ENCODE measurements at regions of chr12 and their contacts with region 1.

Region 1: DNA sequence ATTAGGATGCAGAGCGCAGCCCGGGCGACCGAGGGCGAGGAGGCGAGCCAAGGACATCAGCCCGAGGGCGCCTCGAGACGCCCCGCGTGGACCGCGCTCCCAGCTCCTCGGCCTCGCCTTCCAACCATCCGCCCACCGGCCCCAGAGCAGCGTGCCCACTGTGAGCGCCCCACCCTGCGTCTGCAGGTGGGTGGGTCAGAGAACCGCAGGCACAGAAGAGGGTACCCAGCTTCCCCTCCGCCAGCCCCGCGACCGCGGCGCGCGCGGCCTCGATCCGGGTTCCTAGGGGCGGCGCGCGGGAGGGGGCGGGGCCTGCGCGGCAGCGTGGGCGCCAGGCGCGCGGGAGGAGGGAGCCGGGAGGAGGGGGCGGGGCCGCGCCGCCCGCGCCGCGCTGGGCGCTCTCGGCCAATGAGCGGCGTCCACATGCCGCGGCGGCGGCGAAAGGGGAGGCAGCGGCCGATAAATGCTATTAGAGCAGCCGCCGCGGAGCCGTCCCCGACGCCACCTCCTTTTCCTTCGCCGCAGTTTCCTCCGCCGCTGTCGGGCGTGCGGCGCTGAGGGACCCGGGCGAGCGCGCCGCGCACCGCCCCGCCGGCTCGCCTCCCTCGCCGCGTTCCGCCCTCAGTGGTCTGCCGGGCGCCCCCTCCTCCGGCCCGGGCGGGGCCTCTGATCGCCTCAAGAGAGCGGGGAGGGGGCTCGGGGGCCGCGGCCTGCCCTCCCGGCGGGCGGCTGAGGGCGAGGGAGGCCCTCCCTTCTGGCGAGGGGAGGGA is at the start of gene ATP2A2:
- DNase-seq: peak; percentile 91
- ATAC-seq: peak; percentile 84
- H3K4me3 Mint-ChIP-seq: peak within 1 kb of the TSS; percentile 96
- H3K27ac Mint-ChIP-seq: peak within 1 kb of the TSS; percentile 97
- H3K4me1 Mint-ChIP-seq: peaks cover 45% of the 10 kb centered on the region
- H3K27me3 Mint-ChIP-seq: no peaks in the 10 kb centered on the region
- CTCF ChIP-seq: no peak
- total RNA-seq, gene ATP2A2: 94.8 and 100 TPM in 2 replicates

Region 2: GRCh38 chr12:109713187-109713984 is 567.6 kb before region 1 on chr12 and contains the start of gene FAM222A:
- CTCF ChIA-PET with region 1: no interaction called
- POLR2A ChIA-PET with region 1: no interaction called
- intact Hi-C with region 1: loop called (anchors 2 kb)
- DNase-seq: peak; percentile 96
- ATAC-seq: peak; percentile 85
- H3K4me3 Mint-ChIP-seq: peak within 1 kb of the TSS; percentile 80
- H3K27ac Mint-ChIP-seq: no peak within 1 kb of the TSS
- H3K4me1 Mint-ChIP-seq: peaks cover 12% of the 10 kb centered on the region
- H3K27me3 Mint-ChIP-seq: peaks cover 23% of the 10 kb centered on the region
- CTCF ChIP-seq: no peak
- total RNA-seq, gene FAM222A: 0.73 and 1.6 TPM in 2 replicates

Region 3: DNA sequence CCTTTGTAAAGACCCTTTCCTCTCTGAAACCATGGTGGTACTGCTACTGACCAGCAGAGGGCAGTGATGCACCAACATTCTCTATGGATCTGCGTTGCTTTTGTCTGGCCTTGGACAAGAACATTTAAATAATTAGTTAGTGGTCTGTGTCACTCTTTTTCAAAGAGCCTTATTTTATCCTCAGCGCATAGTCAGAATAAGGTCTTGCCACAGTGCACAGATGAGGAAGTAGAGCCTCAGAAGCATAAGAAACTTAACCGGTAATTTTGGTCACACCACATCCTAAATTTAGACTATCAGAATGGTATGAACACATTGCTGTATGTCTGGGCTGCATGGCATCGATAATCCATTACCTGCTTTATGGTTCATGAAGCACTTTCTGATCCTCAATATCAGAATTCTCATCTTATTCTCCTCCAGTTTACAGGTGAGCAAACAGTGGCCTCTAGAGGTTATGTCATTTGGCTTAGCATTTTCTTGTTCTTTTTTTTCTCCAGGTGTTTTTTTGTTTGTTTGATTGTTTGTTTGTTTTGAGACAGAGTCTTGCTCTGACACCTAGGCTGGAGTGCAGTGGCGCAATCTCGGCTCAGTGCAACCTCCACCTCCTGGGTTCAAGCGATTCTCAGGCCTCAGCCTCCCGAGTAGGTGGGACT is 180.5 kb before region 1 on chr12:
- CTCF ChIA-PET with region 1: no interaction called
- POLR2A ChIA-PET with region 1: interaction called, 6 read pairs
- intact Hi-C with region 1: loop called (anchors 1 kb)
- DNase-seq: peak; percentile 41
- ATAC-seq: peak; percentile 96
- H3K4me3 Mint-ChIP-seq: peak overlapping the region; percentile 50
- H3K27ac Mint-ChIP-seq: peak overlapping the region; percentile 80
- H3K4me1 Mint-ChIP-seq: peaks cover 23% of the 10 kb centered on the region
- H3K27me3 Mint-ChIP-seq: no peaks in the 10 kb centered on the region
- CTCF ChIP-seq: peak; percentile 55

Region 4: DNA sequence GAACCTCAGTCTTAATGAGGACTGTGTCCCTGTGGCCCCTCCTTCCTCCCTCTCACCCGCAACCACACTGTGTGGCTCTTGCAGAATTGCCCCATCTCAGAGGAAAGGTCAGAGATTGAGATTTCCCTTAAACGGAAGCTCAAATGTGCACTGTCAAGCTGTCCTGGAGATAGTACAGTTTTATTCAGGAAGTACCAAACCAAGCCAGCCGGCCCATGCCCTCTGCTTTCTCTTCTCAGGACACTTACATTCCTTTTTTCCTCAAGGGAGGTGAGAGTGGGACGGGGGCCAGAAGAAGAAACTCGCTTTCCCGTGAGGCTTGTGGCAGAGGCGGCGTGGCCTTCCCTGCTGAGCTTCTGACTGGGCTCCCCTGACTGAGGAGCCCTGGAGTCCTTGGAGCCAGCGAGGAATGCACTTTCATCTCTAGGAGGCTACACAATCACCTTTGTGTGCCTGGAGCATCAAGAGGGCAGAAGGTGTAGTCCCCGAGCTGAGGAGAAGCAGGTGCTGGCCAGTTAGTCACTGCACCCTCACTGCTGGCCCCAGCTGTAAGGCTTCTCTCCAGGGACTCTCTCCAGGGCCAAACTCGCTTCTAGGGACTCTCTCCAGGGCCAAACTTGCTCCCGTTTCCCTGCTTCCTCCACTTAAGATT is 24.1 kb before region 1 on chr12:
- CTCF ChIA-PET with region 1: no interaction called
- POLR2A ChIA-PET with region 1: interaction called, 14 read pairs
- intact Hi-C with region 1: no loop called
- DNase-seq: no peak
- ATAC-seq: no peak
- H3K4me3 Mint-ChIP-seq: no peak overlapping the region
- H3K27ac Mint-ChIP-seq: no peak overlapping the region
- H3K4me1 Mint-ChIP-seq: no peaks in the 10 kb centered on the region
- H3K27me3 Mint-ChIP-seq: no peaks in the 10 kb centered on the region
- CTCF ChIP-seq: no peak

Region 5: GRCh38 chr12:110468212-110469048 is 187.5 kb after region 1 on chr12 and contains the starts of genes FAM216A and GPN3:
- CTCF ChIA-PET with region 1: no interaction called
- POLR2A ChIA-PET with region 1: interaction called, 6 read pairs
- intact Hi-C with region 1: loop called (anchors 1 kb)
- DNase-seq: peak; percentile 86
- ATAC-seq: peak; percentile 91
- H3K4me3 Mint-ChIP-seq: peak within 1 kb of the TSS; percentile 100
- H3K27ac Mint-ChIP-seq: peak within 1 kb of the TSS; percentile 96
- H3K4me1 Mint-ChIP-seq: peaks cover 41% of the 10 kb centered on the region
- H3K27me3 Mint-ChIP-seq: no peaks in the 10 kb centered on the region
- CTCF ChIP-seq: no peak
- total RNA-seq, gene FAM216A: 9.7 and 9.9 TPM in 2 replicates
- total RNA-seq, gene GPN3: 17.0 and 19.0 TPM in 2 replicates

Region 6: DNA sequence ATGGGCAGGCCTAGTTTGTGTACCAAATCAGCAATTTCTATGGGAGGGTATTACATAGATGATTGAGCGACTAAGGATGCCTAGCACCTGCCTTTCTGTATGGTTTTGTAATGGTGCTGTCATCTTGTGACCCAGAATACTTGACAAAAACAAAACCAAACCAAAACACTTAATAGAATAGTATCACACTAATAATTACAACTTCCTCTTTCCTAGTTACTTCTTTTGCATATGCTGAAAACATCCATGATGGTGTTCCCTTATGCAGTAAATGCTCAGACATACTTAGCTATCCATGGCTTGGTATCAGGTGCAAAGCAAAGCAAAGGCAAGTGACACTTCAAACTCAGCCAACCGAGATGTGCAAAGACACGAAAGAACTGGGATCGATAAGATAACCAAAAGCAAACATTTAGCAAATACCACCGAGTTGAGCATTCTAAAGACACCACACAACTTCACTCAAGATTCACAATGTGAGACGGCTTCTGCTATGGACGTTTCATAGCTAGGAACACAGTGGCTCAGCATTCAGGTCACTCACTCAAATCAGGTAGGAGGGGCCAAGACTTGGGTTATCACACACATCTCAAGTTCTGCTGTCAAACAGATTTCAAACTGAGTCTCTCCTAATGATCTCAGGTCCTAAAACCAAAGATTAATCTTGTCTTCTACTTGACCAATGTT is 437.4 kb after region 1 on chr12:
- CTCF ChIA-PET with region 1: no interaction called
- POLR2A ChIA-PET with region 1: interaction called, 10 read pairs
- intact Hi-C with region 1: no loop called
- DNase-seq: no peak
- ATAC-seq: peak; percentile 84
- H3K4me3 Mint-ChIP-seq: peak overlapping the region; percentile 21
- H3K27ac Mint-ChIP-seq: peak overlapping the region; percentile 86
- H3K4me1 Mint-ChIP-seq: peaks cover 36% of the 10 kb centered on the region
- H3K27me3 Mint-ChIP-seq: no peaks in the 10 kb centered on the region
- CTCF ChIP-seq: no peak

Region 7: GRCh38 chr12:110826592-110827200 is 545.7 kb after region 1 on chr12:
- CTCF ChIA-PET with region 1: no interaction called
- POLR2A ChIA-PET with region 1: no interaction called
- intact Hi-C with region 1: no loop called
- DNase-seq: peak; percentile 74
- ATAC-seq: peak; percentile 99
- H3K4me3 Mint-ChIP-seq: peak overlapping the region; percentile 80
- H3K27ac Mint-ChIP-seq: peak overlapping the region; percentile 41
- H3K4me1 Mint-ChIP-seq: peaks cover 6% of the 10 kb centered on the region
- H3K27me3 Mint-ChIP-seq: peaks cover 4% of the 10 kb centered on the region
- CTCF ChIP-seq: no peak

Region 8: DNA sequence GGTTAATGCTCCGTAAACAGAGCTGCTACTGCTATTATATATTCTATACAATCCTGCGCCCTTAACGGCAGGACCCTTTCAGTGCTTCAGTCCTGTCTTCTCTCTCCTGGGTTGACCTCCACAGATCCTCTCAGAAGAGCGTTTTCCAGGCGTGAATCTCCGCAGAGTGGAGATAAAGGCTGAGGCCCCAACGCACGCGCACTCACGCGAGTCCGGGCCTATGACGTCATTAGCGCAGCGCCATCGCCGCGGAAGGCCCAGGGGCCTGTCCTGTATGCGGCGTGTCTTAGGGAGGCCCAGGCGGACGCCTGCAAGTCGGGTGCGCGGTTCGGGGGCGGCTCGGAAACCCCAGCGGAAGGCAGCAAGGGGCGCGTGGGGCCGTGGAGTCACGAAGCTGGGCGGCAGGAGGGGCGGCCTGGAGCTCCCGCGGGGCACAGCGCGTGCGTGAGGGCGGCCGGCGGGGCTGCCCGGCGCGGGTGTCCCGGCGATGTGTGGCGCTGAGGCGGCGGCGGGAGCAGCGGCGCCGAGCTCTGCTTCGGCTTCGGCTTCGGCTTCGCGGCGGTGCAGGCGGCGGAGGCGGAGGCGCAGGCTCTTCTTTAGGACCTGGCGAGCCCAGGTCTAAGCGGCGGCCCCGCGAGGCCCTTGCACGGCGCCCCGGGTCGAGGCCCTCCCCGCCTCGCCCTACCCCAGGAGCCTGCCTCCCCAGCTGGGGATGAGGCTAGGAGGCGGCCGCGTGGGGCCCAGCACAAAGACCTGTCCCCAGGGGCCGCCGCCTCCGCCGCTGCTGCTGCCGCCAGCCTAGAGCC is 1561.0 kb after region 1 on chr12 and contains the start of gene MAPKAPK5:
- CTCF ChIA-PET with region 1: no interaction called
- POLR2A ChIA-PET with region 1: no interaction called
- intact Hi-C with region 1: loop called (anchors 5 kb)
- DNase-seq: peak; percentile 98
- ATAC-seq: peak; percentile 90
- H3K4me3 Mint-ChIP-seq: peak within 1 kb of the TSS; percentile 95
- H3K27ac Mint-ChIP-seq: peak within 1 kb of the TSS; percentile 97
- H3K4me1 Mint-ChIP-seq: peaks cover 45% of the 10 kb centered on the region
- H3K27me3 Mint-ChIP-seq: no peaks in the 10 kb centered on the region
- CTCF ChIP-seq: no peak
- total RNA-seq, gene MAPKAPK5: 51.7 and 61.2 TPM in 2 replicates

Measured in activated B cell treated with CpG ODN at 0.5 μM for 24 hours (primary cell).